ENCODE measurements at regions of chr7 and their contacts with region 1.

Region 1: GRCh38 chr7:7077945-7078344 is 104.4 kb upstream of the C1GALT1 start:
- DNase-seq: no peak
- H3K4me3 ChIP-seq: no peak overlapping the region
- H3K27ac ChIP-seq: no peak overlapping the region
- H3K4me1 ChIP-seq: no peaks in the 10 kb centered on the region
- H3K27me3 ChIP-seq: no peaks in the 10 kb centered on the region
- CTCF ChIP-seq: no peak
- EP300 ChIP-seq: no peak
- POLR2A ChIP-seq: no peak
- RAD21 ChIP-seq: no peak

Region 2: DNA sequence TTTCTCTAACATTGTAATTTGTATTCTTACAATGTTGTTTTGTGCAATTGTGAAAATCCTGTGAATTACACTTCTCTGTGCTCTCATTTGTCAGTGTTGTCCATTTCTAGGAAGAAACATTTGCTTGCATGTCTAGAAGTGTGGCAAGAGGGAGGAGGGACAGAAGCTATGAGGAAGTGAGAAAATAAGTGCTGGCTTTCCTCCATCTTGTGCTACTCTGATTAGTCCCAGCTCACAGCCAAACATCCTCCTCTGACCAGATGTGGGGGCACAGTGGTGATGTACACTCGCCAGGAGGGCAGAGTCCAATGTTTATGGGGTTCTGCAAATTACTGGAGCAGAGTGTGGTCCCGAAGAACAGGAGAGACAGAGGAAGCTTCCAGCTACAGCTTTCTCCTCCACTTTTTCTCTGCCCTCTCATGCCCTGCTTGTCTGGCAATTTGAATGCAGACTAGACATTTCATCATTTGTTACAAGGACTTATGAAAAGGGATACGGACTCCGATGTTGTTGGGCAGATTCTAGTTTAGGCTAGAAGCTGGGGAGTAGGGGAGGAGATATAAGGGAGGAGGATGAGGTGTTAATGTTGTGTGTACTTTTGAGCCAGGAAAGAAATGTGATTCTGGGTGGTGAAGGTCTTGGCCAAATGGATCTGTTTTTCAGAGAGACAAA is 26.6 kb before region 1 on chr7:
- CTCF ChIA-PET with region 1: interaction called, 11 read pairs
- POLR2A ChIA-PET with region 1: no interaction called
- DNase-seq: no peak
- H3K4me3 ChIP-seq: no peak overlapping the region
- H3K27ac ChIP-seq: no peak overlapping the region
- H3K4me1 ChIP-seq: no peaks in the 10 kb centered on the region
- H3K27me3 ChIP-seq: no peaks in the 10 kb centered on the region
- CTCF ChIP-seq: no peak
- EP300 ChIP-seq: no peak
- POLR2A ChIP-seq: no peak
- RAD21 ChIP-seq: no peak

Region 3: DNA sequence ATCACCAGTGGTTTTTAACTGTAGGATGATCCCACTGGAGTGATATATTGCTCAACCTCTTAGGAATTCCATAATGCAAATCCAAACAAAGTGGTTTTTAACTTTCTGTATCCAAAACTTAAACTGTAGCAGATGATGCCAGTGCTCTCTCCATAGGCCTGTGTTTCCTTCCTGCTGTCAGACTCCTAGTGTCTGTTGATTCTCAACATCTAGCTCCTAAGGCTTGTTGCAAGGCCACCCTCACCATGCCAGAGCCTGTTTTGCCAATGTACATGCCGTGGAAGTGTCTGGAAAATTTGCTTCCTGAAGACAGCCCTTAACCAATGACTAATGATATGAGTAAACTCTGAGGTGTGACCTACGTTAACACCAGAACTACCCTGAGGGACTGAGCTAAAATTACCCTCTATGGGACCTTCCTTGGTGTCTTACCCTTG is 143.7 kb after region 1 on chr7:
- CTCF ChIA-PET with region 1: no interaction called
- POLR2A ChIA-PET with region 1: no interaction called
- DNase-seq: no peak
- H3K4me3 ChIP-seq: no peak overlapping the region
- H3K27ac ChIP-seq: no peak overlapping the region
- H3K4me1 ChIP-seq: peaks cover 0 to 6% (median 2%) of the 10 kb centered on the region in 4 experiments; a peak in 4 of 7 replicates
- H3K27me3 ChIP-seq: no peaks in the 10 kb centered on the region
- CTCF ChIP-seq: no peak
- EP300 ChIP-seq: no peak
- POLR2A ChIP-seq: no peak
- RAD21 ChIP-seq: no peak